IMR-90 (cell line): ENCODE measurements at regions of chr10 and their contacts with region 1.

Region 1: GRCh38 chr10:9602998-9603397 is 1414.7 kb upstream of the CELF2 start:
- DNase-seq: no peak
- ATAC-seq: no peak
- H3K4me3 ChIP-seq: no peak overlapping the region
- H3K27ac ChIP-seq: no peak overlapping the region
- H3K4me1 ChIP-seq: no peaks in the 10 kb centered on the region
- H3K27me3 ChIP-seq: no peaks in the 10 kb centered on the region
- CTCF ChIP-seq: no peak
- POLR2A ChIP-seq: no peak
- RAD21 ChIP-seq: no peak

Region 2: GRCh38 chr10:9579110-9579705 is 23.8 kb before region 1 on chr10:
- CTCF ChIA-PET with region 1: no interaction called
- POLR2A ChIA-PET with region 1: no interaction called
- dilution Hi-C with region 1: no loop called
- in situ Hi-C with region 1: no loop called
- intact Hi-C with region 1: no loop called
- DNase-seq: peak; percentile 80
- ATAC-seq: peak; percentile 95
- H3K4me3 ChIP-seq: no peak overlapping the region
- H3K27ac ChIP-seq: peak overlapping the region; percentile 78; the same call in 1 of the 2 replicates
- H3K4me1 ChIP-seq: peaks cover 3% of the 10 kb centered on the region; the same call in 1 of the 2 replicates
- H3K27me3 ChIP-seq: no peaks in the 10 kb centered on the region
- CTCF ChIP-seq: no peak
- POLR2A ChIP-seq: no peak
- RAD21 ChIP-seq: no peak

Region 3: GRCh38 chr10:11328264-11329061 is 1725.5 kb after region 1 on chr10:
- CTCF ChIA-PET with region 1: no interaction called
- POLR2A ChIA-PET with region 1: no interaction called
- dilution Hi-C with region 1: no loop called
- in situ Hi-C with region 1: no loop called
- intact Hi-C with region 1: loop called (anchors 5 kb)
- DNase-seq: no peak
- ATAC-seq: no peak
- H3K4me3 ChIP-seq: no peak overlapping the region
- H3K27ac ChIP-seq: no peak overlapping the region
- H3K4me1 ChIP-seq: peaks cover 4% of the 10 kb centered on the region; the same call in 1 of the 2 replicates
- H3K27me3 ChIP-seq: no peaks in the 10 kb centered on the region
- CTCF ChIP-seq: no peak
- POLR2A ChIP-seq: no peak
- RAD21 ChIP-seq: no peak